MCF 10A (cell line): ENCODE measurements at regions of chr15 and their contacts with region 1.

Region 1: GRCh38 chr15:75042730-75043508 is 19.5 kb downstream of the PPCDC start:
- DNase-seq: peak; percentile 39
- H3K4me3 Mint-ChIP-seq: no peak overlapping the region
- H3K27ac Mint-ChIP-seq: peak overlapping the region; percentile 76
- H3K4me1 Mint-ChIP-seq: peaks cover 16% of the 10 kb centered on the region
- H3K27me3 Mint-ChIP-seq: no peaks in the 10 kb centered on the region
- CTCF ChIP-seq: peak; percentile 29

Region 2: DNA sequence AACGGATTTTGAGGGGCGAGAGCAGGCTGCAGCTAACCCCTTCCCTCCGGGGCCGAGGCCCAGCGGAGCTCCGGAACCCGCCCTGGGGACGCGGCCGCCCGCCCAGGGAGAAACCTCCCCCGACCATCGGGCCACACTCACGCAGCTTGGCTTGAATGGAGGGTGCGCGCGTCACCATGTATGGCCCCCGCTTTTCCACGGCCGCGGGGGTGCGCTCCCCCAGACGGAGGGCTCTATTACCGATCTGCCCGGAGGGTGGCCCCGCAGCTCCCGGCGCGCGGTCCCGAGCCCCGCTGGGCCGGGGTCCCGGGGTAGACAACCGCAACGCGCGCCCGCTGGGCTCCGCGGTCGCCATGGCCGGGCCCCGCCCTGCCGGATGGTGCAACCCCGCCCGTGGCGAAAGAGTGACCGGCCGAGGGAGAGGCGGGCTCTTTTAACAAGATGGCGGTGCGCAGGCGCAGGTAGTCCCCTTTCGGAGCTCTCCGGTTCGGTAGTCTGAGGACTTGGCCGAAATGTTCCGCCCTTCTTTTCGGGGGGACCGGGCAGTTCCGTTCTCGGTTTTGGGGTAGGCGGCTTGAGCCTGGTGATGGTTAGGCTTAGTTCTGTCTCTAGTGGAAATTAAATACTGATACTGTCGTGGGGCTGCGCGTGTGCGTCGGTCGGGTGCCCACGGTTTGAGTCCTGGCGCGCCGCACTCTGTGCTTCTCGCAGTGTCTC is 136.3 kb before region 1 on chr15 and contains the start of gene FAM219B:
- CTCF ChIA-PET with region 1: no interaction called
- POLR2A ChIA-PET with region 1: no interaction called
- intact Hi-C with region 1: no loop called
- DNase-seq: peak; percentile 87
- H3K4me3 Mint-ChIP-seq: peak within 1 kb of the TSS; percentile 95
- H3K27ac Mint-ChIP-seq: peak within 1 kb of the TSS; percentile 97
- H3K4me1 Mint-ChIP-seq: peaks cover 15% of the 10 kb centered on the region
- H3K27me3 Mint-ChIP-seq: no peaks in the 10 kb centered on the region
- CTCF ChIP-seq: no peak
- total RNA-seq, gene FAM219B: 62.9 and 68.4 TPM in 2 replicates

Region 3: DNA sequence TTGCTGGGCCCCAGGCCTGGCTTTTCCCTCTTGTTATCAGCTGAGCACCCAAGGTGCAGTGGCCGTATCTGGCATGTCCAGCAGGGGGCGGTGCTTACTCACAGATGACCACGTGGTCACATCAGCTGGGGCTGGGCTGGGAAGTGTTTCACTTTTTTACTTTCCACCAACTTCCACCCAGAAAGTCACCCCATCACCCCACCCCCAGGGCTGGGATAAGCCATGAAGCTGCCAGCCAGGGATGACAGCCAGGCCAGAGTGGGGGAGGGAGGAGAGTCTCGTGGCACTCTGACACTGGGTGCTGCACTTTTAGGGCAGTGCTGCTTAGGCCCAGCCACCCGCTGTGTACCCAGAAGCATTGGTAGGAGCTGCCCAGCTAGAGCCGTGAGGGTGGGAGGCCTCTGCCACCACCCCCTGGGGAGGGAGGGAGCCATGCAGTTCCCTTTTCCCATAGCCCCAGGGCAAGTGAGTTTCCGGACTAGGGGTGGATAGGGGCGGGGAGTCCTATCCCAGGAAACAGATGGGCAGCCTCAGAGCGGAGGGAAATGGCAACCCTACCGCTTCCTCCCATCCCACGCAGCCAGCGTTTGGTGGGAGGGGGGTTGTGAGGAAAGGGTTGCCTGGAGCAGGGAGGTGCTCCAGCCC is 13.4 kb before region 1 on chr15:
- CTCF ChIA-PET with region 1: interaction called, 9 read pairs
- POLR2A ChIA-PET with region 1: no interaction called
- intact Hi-C with region 1: loop called (anchors 1 kb)
- DNase-seq: peak; percentile 94
- H3K4me3 Mint-ChIP-seq: peak overlapping the region; percentile 10
- H3K27ac Mint-ChIP-seq: peak overlapping the region; percentile 27
- H3K4me1 Mint-ChIP-seq: peaks cover 19% of the 10 kb centered on the region
- H3K27me3 Mint-ChIP-seq: no peaks in the 10 kb centered on the region
- CTCF ChIP-seq: peak; percentile 91